Endothelial cell of umbilical vein (primary cell): ENCODE measurements at regions of chr1 and their contacts with region 1.

Region 1: GRCh38 chr1:32724678-32725614 is 22.4 kb upstream of the SYNC start:
- DNase-seq: peak; percentile 84
- H3K4me3 ChIP-seq: no peak overlapping the region
- H3K27ac ChIP-seq: peak overlapping the region; percentile 67
- H3K4me1 ChIP-seq: peaks cover 13% of the 10 kb centered on the region
- H3K27me3 ChIP-seq: no peaks in the 10 kb centered on the region
- CTCF ChIP-seq: no peak
- POLR2A ChIP-seq: no peak

Region 2: DNA sequence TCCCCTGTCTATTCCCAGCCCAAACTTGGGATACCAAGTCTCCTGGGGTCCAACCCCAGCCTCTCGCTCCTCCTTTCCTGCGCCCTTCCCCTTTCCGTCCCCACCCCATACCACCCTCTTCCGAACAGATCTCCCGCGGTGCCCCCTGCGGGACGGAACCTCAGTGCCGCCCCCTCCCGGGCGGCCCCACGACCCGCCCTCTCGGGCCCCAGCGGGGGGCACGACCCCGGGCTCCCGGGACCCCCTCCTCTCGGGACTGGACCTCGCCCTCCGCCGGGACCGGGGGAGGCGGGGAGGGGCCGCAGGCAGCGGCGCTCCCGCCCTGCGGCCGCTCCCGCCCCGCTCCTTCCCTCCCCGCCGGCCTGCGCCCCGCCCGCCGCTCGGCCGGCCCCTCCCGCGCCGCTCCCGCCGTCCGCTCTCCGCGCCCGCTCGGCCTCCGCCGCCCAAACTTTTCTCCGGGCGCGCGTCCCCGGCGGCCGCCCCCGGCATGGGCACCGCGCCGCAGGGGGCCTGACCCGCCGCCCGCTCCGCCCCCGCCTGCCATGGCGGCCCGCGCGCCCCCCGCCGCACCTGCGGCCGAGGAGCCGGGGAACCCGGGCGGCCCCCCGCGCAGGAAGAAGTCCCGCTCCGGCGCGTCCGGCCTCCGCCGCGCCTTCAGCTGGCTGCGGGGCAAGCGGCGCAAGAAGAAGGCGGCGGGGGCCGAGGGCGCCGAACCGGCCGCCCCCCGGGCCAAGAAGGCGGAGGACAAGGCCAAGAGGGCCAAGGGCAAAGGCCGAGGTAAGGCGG is 16.7 kb after region 1 on chr1:
- CTCF ChIA-PET with region 1: interaction called, 3 read pairs
- POLR2A ChIA-PET with region 1: no interaction called
- dilution Hi-C with region 1: no loop called
- intact Hi-C with region 1: loop called (anchors 2 kb)
- DNase-seq: no peak
- H3K4me3 ChIP-seq: peak overlapping the region; percentile 63 to 78 (median 64)
- H3K27ac ChIP-seq: no peak overlapping the region
- H3K4me1 ChIP-seq: peaks cover 16% of the 10 kb centered on the region
- H3K27me3 ChIP-seq: no peaks in the 10 kb centered on the region
- CTCF ChIP-seq: peak; percentile 46 to 56
- POLR2A ChIP-seq: no peak

Region 3: DNA sequence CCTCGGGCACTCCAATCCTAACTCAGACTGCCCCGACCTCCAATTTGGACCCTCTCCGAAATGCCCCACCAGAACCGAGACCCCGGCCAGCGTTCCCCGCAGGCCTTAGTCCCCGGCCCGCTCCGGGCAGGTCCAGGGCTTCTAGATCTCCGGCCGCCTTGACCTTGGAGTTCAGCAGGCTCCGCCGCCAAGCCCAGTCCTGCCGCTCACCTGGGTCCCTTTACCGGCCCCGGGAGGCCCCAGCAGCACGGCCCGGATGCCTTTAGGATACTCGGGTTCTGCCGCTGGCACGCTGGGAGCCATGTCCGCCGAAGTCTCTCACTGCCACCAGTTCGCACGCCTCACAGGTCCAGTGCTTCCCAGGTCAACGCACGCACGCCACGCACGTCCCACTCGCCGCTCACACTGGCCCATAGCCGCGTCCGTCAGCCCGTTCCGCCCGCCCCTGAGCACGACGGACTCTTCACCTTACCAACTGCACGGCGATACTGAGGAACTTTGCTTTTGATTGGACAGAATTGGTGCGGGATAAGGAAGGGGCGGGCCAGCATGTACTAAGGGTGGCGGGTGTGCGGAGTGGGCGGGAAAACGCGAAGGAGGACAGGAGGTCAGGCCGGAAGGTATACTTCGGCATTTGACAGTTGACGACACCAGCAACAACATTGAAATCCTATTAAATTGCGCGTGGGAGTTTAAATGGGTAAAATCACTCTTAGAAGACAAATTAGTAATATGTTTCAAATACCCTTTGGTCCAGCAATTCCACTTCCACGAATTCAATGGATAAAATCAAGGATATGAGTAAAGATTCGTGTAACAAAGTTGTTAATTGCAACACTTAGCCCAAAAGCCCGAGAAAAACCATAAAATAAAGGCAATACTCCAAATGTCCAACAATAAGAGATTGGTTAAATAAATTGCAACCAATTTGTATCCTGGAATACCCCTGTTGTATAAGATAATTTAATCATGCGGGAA is 311.9 kb after region 1 on chr1 and contains the start of gene AK2:
- CTCF ChIA-PET with region 1: no interaction called
- POLR2A ChIA-PET with region 1: no interaction called
- dilution Hi-C with region 1: no loop called
- intact Hi-C with region 1: no loop called
- DNase-seq: peak; percentile 99
- H3K4me3 ChIP-seq: peak within 1 kb of the TSS; percentile 56 to 77 (median 65)
- H3K27ac ChIP-seq: peak within 1 kb of the TSS; percentile 52
- H3K4me1 ChIP-seq: peaks cover 15% of the 10 kb centered on the region
- H3K27me3 ChIP-seq: no peaks in the 10 kb centered on the region
- CTCF ChIP-seq: no peak
- POLR2A ChIP-seq: peak; percentile 18
- total RNA-seq, gene AK2: 131 and 134 TPM in 2 replicates